Heart right ventricle (tissue), 16 donors: ENCODE measurements at regions of chr2 and their contacts with region 1.

Region 1: GRCh38 chr2:187345338-187345737 is 102.7 kb downstream of the CALCRL start:
- DNase-seq: no peak
- ATAC-seq: no peak
- H3K4me3 ChIP-seq: no peak overlapping the region
- H3K27ac ChIP-seq: no peak overlapping the region
- H3K4me1 ChIP-seq: peaks cover 0 to 17% (median 7%) of the 10 kb centered on the region in 9 donors
- H3K27me3 ChIP-seq: no peaks in the 10 kb centered on the region
- CTCF ChIP-seq: no peak

Region 2: GRCh38 chr2:187319441-187320108 is 25.8 kb before region 1 on chr2:
- intact Hi-C with region 1: loop called in 1 of 10 experiments (anchors 2 kb)
- DNase-seq: no peak
- ATAC-seq: peak in 2 of 8 donors; percentile 42 to 55
- H3K4me3 ChIP-seq: no peak overlapping the region
- H3K27ac ChIP-seq: peak overlapping the region in 1 of 10 donors; percentile 34
- H3K4me1 ChIP-seq: peaks cover 0 to 23% (median 4%) of the 10 kb centered on the region in 9 donors
- H3K27me3 ChIP-seq: no peaks in the 10 kb centered on the region
- CTCF ChIP-seq: no peak

Region 3: GRCh38 chr2:187466129-187466792 is 120.9 kb after region 1 on chr2:
- intact Hi-C with region 1: no loop called
- DNase-seq: no peak
- ATAC-seq: no peak
- H3K4me3 ChIP-seq: no peak overlapping the region
- H3K27ac ChIP-seq: no peak overlapping the region
- H3K4me1 ChIP-seq: no peaks in the 10 kb centered on the region
- H3K27me3 ChIP-seq: no peaks in the 10 kb centered on the region
- CTCF ChIP-seq: no peak